ENCODE measurements at regions of chr11 and their contacts with region 1.

Region 1: GRCh38 chr11:130002846-130003716 is 446 bp upstream of the PRDM10 start:
- DNase-seq: peak; percentile 97 to 99 (median 97)
- ATAC-seq: peak; percentile 84
- H3K4me3 ChIP-seq: peak overlapping the region; percentile 75
- H3K27ac ChIP-seq: peak overlapping the region; percentile 100
- H3K4me1 ChIP-seq: peaks cover 25 to 34% of the 10 kb centered on the region in 2 experiments
- H3K27me3 ChIP-seq: no peaks in the 10 kb centered on the region
- CTCF ChIP-seq: no peak
- EP300 ChIP-seq: peak; percentile 72
- POLR2A ChIP-seq: peak; percentile 76
- RAD21 ChIP-seq: 0 out of 4 replicates have a peak, but pooled peaks of 1 of the 2 experiments have one; percentile 15

Region 2: DNA sequence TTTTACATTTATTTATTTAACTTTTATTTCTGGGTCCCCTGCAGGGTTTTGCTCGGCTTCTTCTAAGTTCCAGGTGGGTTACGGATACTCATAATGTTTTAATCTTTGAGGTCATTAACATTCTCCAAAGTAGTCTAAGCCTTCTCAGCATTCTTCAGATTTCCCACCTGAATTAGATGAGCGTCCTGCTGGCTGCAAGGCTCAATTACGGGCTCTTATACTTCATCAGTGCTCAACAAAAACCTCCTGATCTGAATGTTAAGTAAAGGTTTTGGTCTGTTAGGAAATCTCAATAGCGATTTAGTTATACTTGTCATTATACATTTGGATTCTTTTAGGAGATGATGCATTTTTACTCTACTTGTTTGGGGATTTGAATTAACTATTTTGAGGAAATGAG is 80.4 kb before region 1 on chr11:
- CTCF ChIA-PET with region 1: no interaction called
- POLR2A ChIA-PET with region 1: interaction called, 3 read pairs
- in situ Hi-C with region 1: no loop called
- intact Hi-C with region 1: loop called (anchors 2 kb)
- DNase-seq: no peak
- ATAC-seq: peak; percentile 44; the same call in 2 of the 3 replicates
- H3K4me3 ChIP-seq: no peak overlapping the region
- H3K27ac ChIP-seq: no peak overlapping the region
- H3K4me1 ChIP-seq: no peaks in the 10 kb centered on the region
- H3K27me3 ChIP-seq: no peaks in the 10 kb centered on the region
- CTCF ChIP-seq: no peak
- EP300 ChIP-seq: no peak
- POLR2A ChIP-seq: no peak
- RAD21 ChIP-seq: no peak

Region 3: DNA sequence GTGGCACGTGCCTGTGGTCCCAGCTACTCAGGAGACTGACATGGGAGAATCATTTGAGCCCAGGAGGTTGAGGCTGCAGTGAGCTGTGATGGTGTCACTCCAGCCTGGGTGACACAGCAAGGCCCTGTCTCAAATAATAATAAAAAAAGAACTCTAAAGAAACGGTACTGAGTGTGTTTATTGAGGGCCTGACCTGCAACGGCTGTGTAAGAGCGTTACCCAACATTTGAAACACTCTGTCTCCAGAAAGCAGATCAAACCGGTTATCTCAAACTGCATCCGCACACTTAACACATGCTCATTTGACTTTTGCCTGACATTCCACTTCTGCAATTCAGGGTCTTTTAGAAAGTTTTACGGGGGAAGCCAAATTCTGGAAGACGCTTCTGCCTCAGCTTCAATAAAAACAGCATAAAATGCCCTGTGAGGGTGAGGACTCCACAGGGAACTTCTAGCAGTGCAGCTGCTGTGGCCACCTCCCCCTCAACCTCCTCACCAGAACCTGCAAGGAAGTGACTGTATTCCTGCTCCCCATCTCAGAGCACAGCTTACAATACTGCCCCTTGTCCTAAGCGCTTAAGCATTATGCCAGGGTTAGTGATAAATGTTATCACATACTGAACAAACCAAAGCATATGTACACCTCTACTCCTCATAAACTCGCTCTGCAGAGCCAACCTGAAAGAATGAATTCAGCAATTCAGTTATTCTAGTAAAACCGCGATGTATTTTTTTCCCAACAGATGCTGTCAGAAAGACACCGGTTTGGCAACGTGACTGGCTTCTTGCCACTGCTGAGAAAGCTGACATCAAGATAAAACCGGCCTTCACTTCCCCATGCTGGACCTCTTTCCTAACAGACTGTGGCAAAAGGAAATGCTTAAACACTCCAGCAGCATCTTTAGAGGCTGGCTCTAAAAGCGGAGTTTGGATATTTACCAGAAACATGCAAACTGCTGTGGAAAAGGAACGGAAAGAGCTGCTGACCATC is 52.7 kb before region 1 on chr11:
- CTCF ChIA-PET with region 1: no interaction called
- POLR2A ChIA-PET with region 1: interaction called, 4 read pairs
- in situ Hi-C with region 1: no loop called
- intact Hi-C with region 1: loop called (anchors 2 kb)
- DNase-seq: peak in 3 of 4 experiments; percentile 27 to 59 (median 46)
- ATAC-seq: peak; percentile 79
- H3K4me3 ChIP-seq: no peak overlapping the region
- H3K27ac ChIP-seq: peak overlapping the region; percentile 70
- H3K4me1 ChIP-seq: peaks cover 33 to 42% of the 10 kb centered on the region in 2 experiments
- H3K27me3 ChIP-seq: no peaks in the 10 kb centered on the region
- CTCF ChIP-seq: no peak
- EP300 ChIP-seq: peak; percentile 1; the same call in 1 of the 2 replicates
- POLR2A ChIP-seq: no peak
- RAD21 ChIP-seq: no peak

Region 4: GRCh38 chr11:129979046-129979605 is 24.0 kb before region 1 on chr11:
- CTCF ChIA-PET with region 1: no interaction called
- POLR2A ChIA-PET with region 1: no interaction called
- in situ Hi-C with region 1: no loop called
- intact Hi-C with region 1: no loop called
- DNase-seq: no peak
- ATAC-seq: peak; percentile 34; the same call in 2 of the 3 replicates
- H3K4me3 ChIP-seq: no peak overlapping the region
- H3K27ac ChIP-seq: no peak overlapping the region
- H3K4me1 ChIP-seq: peaks cover 4 to 6% of the 10 kb centered on the region in 2 experiments; a peak in 3 of 5 replicates
- H3K27me3 ChIP-seq: no peaks in the 10 kb centered on the region
- CTCF ChIP-seq: no peak
- EP300 ChIP-seq: no peak
- POLR2A ChIP-seq: no peak
- RAD21 ChIP-seq: no peak

Region 5: GRCh38 chr11:129992161-129992944 is 10.7 kb before region 1 on chr11:
- CTCF ChIA-PET with region 1: interaction called, 3 read pairs
- POLR2A ChIA-PET with region 1: interaction called, 26 read pairs
- in situ Hi-C with region 1: no loop called
- intact Hi-C with region 1: no loop called
- DNase-seq: peak; percentile 46 to 74 (median 65)
- ATAC-seq: peak; percentile 98
- H3K4me3 ChIP-seq: no peak overlapping the region
- H3K27ac ChIP-seq: no peak overlapping the region
- H3K4me1 ChIP-seq: peaks cover 0 to 4% of the 10 kb centered on the region in 2 experiments; a peak in 2 of 5 replicates
- H3K27me3 ChIP-seq: no peaks in the 10 kb centered on the region
- CTCF ChIP-seq: peak; percentile 66 to 74 (median 73)
- EP300 ChIP-seq: no peak
- POLR2A ChIP-seq: no peak
- RAD21 ChIP-seq: peak; percentile 35 to 78

Region 6: DNA sequence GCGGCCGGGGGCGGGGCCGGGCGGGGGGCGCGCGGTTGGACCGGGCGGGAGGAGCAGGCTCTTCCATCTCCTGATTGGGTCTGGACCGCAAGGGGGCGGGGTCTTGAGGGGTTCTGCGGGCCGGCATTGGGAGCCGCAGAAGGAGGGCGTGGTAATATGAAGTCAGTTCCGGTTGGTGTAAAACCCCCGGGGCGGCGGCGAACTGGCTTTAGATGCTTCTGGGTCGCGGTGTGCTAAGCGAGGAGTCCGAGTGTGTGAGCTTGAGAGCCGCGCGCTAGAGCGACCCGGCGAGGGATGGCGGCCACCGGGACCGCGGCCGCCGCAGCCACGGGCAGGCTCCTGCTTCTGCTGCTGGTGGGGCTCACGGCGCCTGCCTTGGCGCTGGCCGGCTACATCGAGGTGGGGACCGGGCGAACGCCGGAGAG is 66.6 kb after region 1 on chr11 and contains the start of gene APLP2:
- CTCF ChIA-PET with region 1: no interaction called
- POLR2A ChIA-PET with region 1: interaction called, 35 read pairs
- in situ Hi-C with region 1: no loop called
- intact Hi-C with region 1: loop called (anchors 1 kb)
- DNase-seq: peak; percentile 95 to 99 (median 96)
- ATAC-seq: peak; percentile 82
- H3K4me3 ChIP-seq: peak within 1 kb of the TSS; percentile 78
- H3K27ac ChIP-seq: peak within 1 kb of the TSS; percentile 90
- H3K4me1 ChIP-seq: peaks cover 11 to 21% of the 10 kb centered on the region in 2 experiments; a peak in 4 of 5 replicates
- H3K27me3 ChIP-seq: no peaks in the 10 kb centered on the region
- CTCF ChIP-seq: no peak
- EP300 ChIP-seq: no peak
- POLR2A ChIP-seq: peak; percentile 96
- RAD21 ChIP-seq: no peak; a peak in 1 of 4 replicates
- polyA plus RNA-seq, gene APLP2: 17.4 to 20.3 TPM

Region 7: GRCh38 chr11:130403271-130403804 is 400.3 kb after region 1 on chr11:
- CTCF ChIA-PET with region 1: no interaction called
- POLR2A ChIA-PET with region 1: no interaction called
- in situ Hi-C with region 1: no loop called
- intact Hi-C with region 1: no loop called
- DNase-seq: no peak
- ATAC-seq: peak; percentile 36; the same call in 1 of the 3 replicates
- H3K4me3 ChIP-seq: no peak overlapping the region
- H3K27ac ChIP-seq: no peak overlapping the region
- H3K4me1 ChIP-seq: no peaks in the 10 kb centered on the region
- H3K27me3 ChIP-seq: peaks cover 31 to 80% of the 10 kb centered on the region in 2 experiments
- CTCF ChIP-seq: no peak
- EP300 ChIP-seq: no peak
- POLR2A ChIP-seq: no peak
- RAD21 ChIP-seq: no peak